Activated CD8-positive, alpha-beta T cell treated with anti-CD3 and anti-CD28 coated beads, Interleukin-2, amount 10 ng/mL, durations not matched to agents 7 days and 5 days (primary cell): ENCODE measurements at regions of chr12 and their contacts with region 1.

Region 1: GRCh38 chr12:45728630-45729232 is 775 bp upstream of the ARID2 start:
- DNase-seq: peak; percentile 98
- ATAC-seq: peak; percentile 69
- H3K4me3 Mint-ChIP-seq: peak overlapping the region; percentile 100
- H3K27ac Mint-ChIP-seq: peak overlapping the region; percentile 99
- H3K4me1 Mint-ChIP-seq: peaks cover 20% of the 10 kb centered on the region
- H3K27me3 Mint-ChIP-seq: no peaks in the 10 kb centered on the region

Region 2: GRCh38 chr12:45655201-45655600 is 73.5 kb before region 1 on chr12:
- CTCF ChIA-PET with region 1: interaction called, 67 read pairs
- POLR2A ChIA-PET with region 1: interaction called, 16 read pairs
- DNase-seq: peak; percentile 80
- ATAC-seq: peak; percentile 100
- H3K4me3 Mint-ChIP-seq: no peak overlapping the region
- H3K27ac Mint-ChIP-seq: no peak overlapping the region
- H3K4me1 Mint-ChIP-seq: peaks cover 14% of the 10 kb centered on the region
- H3K27me3 Mint-ChIP-seq: peaks cover 4% of the 10 kb centered on the region

Region 3: GRCh38 chr12:45670346-45671065 is 58.2 kb before region 1 on chr12:
- CTCF ChIA-PET with region 1: interaction called, 100 read pairs
- POLR2A ChIA-PET with region 1: interaction called, 73 read pairs
- DNase-seq: peak; percentile 56
- ATAC-seq: peak; percentile 58
- H3K4me3 Mint-ChIP-seq: peak overlapping the region; percentile 23
- H3K27ac Mint-ChIP-seq: peak overlapping the region; percentile 74
- H3K4me1 Mint-ChIP-seq: peaks cover 48% of the 10 kb centered on the region
- H3K27me3 Mint-ChIP-seq: no peaks in the 10 kb centered on the region

Region 4: GRCh38 chr12:45745861-45746277 is 17.1 kb after region 1 on chr12:
- CTCF ChIA-PET with region 1: interaction called, 20 read pairs
- POLR2A ChIA-PET with region 1: interaction called, 21 read pairs
- DNase-seq: no peak
- ATAC-seq: peak; percentile 39
- H3K4me3 Mint-ChIP-seq: no peak overlapping the region
- H3K27ac Mint-ChIP-seq: no peak overlapping the region
- H3K4me1 Mint-ChIP-seq: peaks cover 36% of the 10 kb centered on the region
- H3K27me3 Mint-ChIP-seq: no peaks in the 10 kb centered on the region